Left ventricle myocardium superior (tissue), 1 donor: ENCODE measurements at regions of chr16 and their contacts with region 1.

Region 1: DNA sequence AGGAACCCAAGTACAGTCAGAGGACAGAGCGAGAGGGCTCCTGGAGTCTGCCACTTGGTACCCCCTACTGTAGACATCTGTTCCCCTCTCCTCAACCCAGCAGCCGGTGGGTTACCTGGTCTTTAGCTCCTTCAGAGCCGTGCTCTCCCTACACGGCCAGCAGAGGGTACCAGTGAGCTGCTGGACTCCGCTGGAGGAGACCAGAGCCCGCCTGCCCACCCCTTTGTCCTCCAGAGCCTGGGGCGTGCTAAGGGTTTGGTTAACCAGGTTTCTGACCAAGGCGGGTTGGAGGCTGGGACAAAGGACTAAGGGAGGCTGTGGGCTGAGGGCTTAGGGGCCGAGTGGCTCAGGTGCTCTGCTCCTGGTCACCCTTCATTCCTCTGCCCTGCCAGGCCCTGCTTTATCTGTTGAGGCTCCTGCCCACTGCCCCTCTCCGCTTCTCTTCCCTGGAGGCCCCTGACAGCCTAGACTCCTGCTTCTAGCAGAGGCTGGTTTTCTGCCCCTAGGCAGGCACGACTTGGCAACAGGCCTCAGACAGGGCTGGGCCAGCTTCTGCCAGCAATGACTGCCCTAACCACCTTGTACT is 2.7 kb upstream of the HSD11B2 start:
- DNase-seq: peak; percentile 85
- ATAC-seq: peak; percentile 79

Region 2: DNA sequence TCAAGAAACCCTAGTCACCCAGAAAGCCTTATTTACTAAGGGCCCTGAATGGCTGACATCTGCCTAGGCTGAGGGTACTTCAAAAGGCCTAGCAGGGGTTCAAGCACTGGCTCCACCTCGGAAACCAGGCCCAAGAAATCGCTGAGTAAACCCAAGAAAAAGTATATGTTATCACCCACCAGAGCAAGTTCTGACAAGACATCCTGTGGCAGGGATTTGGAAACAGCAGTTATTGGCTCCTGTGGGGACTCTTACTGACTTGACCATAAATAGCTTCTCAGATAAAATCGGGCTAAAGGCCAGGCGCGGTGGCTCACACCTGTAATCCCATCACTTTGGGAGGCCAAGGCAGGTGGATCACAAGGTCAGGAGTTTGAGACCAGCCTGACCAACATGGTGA is 40.5 kb after region 1 on chr16:
- intact Hi-C with region 1: loop called (anchors 5 kb)
- DNase-seq: peak; percentile 12
- ATAC-seq: no peak